Activated T-helper 1 cell treated with anti-CD3 and anti-CD28 coated beads, Interleukin-12 subunit alpha, Interleukin-12 subunit beta, Interleukin-2, Interleukin-4 antibody, amounts not matched to agents 30 ng/mL and 10 ng/mL and 1 ng/mL, durations not matched to agents 14 hours and 24 hours and 36 hours (primary cell): ENCODE measurements at regions of chr15 and their contacts with region 1.

Region 1: GRCh38 chr15:47987908-47988532 is 132.8 kb upstream of the SLC24A5 start:
- DNase-seq: peak; percentile 5
- H3K4me3 Mint-ChIP-seq: no peak overlapping the region
- H3K27ac Mint-ChIP-seq: no peak overlapping the region
- H3K4me1 Mint-ChIP-seq: no peaks in the 10 kb centered on the region
- H3K27me3 Mint-ChIP-seq: peaks cover 7% of the 10 kb centered on the region

Region 2: DNA sequence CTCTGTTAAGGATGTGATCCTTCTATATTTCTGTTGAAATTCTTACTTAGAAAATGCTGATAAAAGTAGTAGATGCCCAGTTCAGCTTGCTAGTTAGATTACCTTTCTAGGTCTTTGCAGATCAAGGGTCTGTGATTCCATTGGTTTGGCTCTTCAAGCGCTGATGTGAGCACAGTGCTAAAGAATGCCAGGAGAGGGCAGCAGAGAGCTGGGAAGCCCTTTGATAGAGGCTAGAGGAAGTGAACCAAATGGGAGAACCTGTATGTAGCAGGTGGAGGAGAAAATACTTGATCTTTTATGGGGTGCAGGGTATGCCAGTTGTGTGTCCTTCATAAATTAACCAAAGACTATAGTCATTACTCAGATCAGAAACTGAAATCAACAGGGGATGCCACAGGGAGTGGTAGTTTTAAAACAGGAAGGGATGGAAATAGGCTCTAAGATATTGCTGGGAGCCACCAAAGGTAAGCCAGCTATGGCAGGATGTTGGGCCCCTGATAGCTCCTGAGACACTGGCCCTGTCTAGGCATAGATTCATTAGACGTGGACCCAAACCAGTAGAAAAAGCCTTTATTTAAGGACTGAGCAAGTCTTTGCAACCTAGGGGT is 1675.8 kb before region 1 on chr15:
- intact Hi-C with region 1: loop called (anchors 2 kb)
- DNase-seq: peak; percentile 22
- H3K4me3 Mint-ChIP-seq: no peak overlapping the region
- H3K27ac Mint-ChIP-seq: no peak overlapping the region
- H3K4me1 Mint-ChIP-seq: no peaks in the 10 kb centered on the region
- H3K27me3 Mint-ChIP-seq: no peaks in the 10 kb centered on the region

Region 3: DNA sequence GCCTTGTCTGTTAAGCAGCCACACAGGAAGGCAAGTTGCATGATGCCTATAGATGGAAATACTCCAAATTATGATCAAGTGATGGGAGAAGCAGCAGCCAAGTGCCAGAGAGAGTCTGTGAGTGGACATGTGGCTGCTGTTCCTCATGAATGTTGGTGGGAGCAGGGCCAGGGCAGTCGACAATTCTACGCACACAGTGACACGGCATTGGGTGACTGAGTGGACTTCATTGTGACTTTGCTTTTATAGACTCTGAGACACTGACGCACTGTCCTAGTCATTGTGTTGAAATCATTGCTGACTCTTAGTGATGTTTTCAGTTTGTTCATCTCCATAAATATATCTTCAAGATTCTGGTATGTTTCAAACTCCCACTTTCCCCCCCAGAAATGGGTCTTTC is 517.0 kb before region 1 on chr15:
- intact Hi-C with region 1: loop called (anchors 1 kb)
- DNase-seq: no peak
- H3K4me3 Mint-ChIP-seq: no peak overlapping the region
- H3K27ac Mint-ChIP-seq: no peak overlapping the region
- H3K4me1 Mint-ChIP-seq: no peaks in the 10 kb centered on the region
- H3K27me3 Mint-ChIP-seq: no peaks in the 10 kb centered on the region

Region 4: DNA sequence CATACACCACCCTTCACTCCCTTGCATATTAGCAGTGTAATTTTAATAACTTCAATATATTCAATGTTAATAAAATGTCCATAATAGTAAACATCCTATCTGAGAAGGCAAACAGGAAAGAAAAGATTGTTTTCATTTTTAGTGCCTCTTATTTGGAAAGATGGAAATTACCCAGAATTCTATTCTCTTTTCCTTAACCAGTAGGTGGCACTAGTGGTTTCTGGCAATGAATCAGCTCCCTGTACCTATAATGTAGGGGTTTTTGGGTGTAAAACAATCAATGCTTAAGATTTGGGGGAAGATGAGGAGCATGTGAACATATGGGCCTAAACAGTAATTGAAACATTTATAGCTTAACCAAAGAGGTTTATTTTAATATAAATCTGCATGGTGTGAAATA is 276.4 kb before region 1 on chr15:
- intact Hi-C with region 1: loop called (anchors 2 kb)
- DNase-seq: no peak
- H3K4me3 Mint-ChIP-seq: no peak overlapping the region
- H3K27ac Mint-ChIP-seq: no peak overlapping the region
- H3K4me1 Mint-ChIP-seq: no peaks in the 10 kb centered on the region
- H3K27me3 Mint-ChIP-seq: peaks cover 25% of the 10 kb centered on the region

Region 5: DNA sequence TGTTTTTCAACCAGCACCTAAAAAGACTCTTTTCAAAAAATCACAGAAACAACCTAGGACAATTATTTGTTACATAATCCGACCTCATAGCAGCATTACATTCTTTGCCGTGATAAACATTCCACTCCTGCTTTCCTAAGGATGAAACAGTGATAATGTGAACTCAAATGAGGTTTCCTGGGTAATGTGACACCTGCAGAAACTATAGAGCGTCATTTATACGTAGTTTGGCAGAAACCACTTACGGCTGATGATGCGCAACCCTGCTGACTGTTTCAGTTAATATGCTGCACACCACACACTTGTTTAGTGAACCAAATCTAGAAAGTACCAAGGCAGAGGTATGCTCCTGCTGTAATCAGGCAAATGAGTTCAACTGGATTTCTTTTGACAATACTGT is 214.9 kb before region 1 on chr15:
- intact Hi-C with region 1: no loop called
- DNase-seq: no peak
- H3K4me3 Mint-ChIP-seq: no peak overlapping the region
- H3K27ac Mint-ChIP-seq: no peak overlapping the region
- H3K4me1 Mint-ChIP-seq: no peaks in the 10 kb centered on the region
- H3K27me3 Mint-ChIP-seq: no peaks in the 10 kb centered on the region

Region 6: DNA sequence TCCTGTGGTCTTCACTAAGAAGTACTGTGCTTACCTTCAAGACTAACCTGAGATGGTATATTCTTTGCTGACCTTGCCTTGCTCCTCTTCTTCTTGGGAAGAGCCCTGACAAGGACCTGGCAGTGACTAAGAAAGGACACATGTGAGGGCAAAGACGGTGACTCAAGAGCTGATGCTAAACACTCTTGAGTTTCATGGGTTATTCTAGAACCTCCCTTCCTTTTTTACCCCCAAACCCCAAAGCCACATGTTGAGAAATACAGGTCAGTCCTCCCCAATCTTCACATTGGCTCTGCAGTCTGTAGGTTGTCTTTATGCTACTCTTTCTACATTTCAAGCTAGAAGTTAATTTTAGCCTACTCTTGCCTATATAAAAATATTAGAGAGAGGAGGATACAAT is 70.1 kb before region 1 on chr15:
- intact Hi-C with region 1: loop called (anchors 5 kb)
- DNase-seq: no peak
- H3K4me3 Mint-ChIP-seq: no peak overlapping the region
- H3K27ac Mint-ChIP-seq: no peak overlapping the region
- H3K4me1 Mint-ChIP-seq: no peaks in the 10 kb centered on the region
- H3K27me3 Mint-ChIP-seq: no peaks in the 10 kb centered on the region

Region 7: GRCh38 chr15:48025118-48025517 is 37.1 kb after region 1 on chr15:
- intact Hi-C with region 1: no loop called
- DNase-seq: no peak
- H3K4me3 Mint-ChIP-seq: no peak overlapping the region
- H3K27ac Mint-ChIP-seq: no peak overlapping the region
- H3K4me1 Mint-ChIP-seq: no peaks in the 10 kb centered on the region
- H3K27me3 Mint-ChIP-seq: no peaks in the 10 kb centered on the region

Region 8: DNA sequence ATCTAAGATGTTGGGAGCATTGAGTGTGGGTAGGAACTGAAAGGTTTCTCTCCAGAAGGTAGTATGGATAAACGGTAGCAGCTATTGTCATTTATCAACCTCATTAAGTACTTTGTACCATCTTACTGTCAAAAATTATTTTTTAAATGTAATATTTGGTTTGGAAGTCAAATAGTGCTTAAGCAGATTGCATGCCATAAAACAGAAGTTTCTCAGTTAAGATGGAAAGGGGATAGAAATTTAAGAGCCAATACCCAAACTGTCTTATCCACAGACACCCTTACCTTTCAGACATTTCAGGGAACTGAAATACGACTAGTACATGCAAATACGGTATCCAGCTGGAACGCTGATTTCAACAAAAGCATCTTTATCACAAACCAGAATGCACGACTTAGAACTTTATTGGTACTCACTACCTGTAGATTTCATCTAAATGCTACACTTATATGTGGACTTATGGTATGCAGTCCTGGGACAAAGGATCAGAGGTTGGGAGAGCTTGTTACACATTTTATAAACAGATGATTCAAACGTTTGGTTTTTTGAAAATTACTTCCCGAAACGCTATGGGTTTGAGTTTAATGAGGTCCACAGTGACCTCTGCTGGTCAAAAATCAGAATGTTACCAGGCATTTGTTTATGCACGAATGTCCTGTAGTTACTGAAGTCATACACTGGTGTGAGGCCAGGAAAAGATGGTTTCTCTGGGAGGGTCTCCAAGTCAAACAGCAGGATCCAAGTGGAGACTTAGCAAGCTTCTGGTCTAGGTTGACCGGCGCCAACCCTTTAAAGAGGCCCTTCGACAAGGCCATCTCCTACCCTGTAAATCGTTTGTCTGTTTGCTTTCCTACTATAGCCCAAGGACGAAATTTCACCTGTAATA is 297.6 kb after region 1 on chr15:
- intact Hi-C with region 1: loop called (anchors 2 kb)
- DNase-seq: peak; percentile 19
- H3K4me3 Mint-ChIP-seq: no peak overlapping the region
- H3K27ac Mint-ChIP-seq: no peak overlapping the region
- H3K4me1 Mint-ChIP-seq: peaks cover 7% of the 10 kb centered on the region
- H3K27me3 Mint-ChIP-seq: peaks cover 6% of the 10 kb centered on the region